ENCODE measurements at regions of chr2 and their contacts with region 1.

Region 1: GRCh38 chr2:219155054-219155644 is 5.5 kb downstream of the NHEJ1 start:
- DNase-seq: peak; percentile 61
- H3K4me3 ChIP-seq: no peak overlapping the region
- H3K27ac ChIP-seq: no peak overlapping the region
- H3K4me1 ChIP-seq: peaks cover 6% of the 10 kb centered on the region
- H3K27me3 ChIP-seq: no peaks in the 10 kb centered on the region
- CTCF ChIP-seq: peak; percentile 28 to 36
- POLR2A ChIP-seq: no peak

Region 2: GRCh38 chr2:218485986-218486667 is 669.0 kb before region 1 on chr2:
- CTCF ChIA-PET with region 1: no interaction called
- POLR2A ChIA-PET with region 1: no interaction called
- dilution Hi-C with region 1: no loop called
- intact Hi-C with region 1: no loop called
- DNase-seq: no peak
- H3K4me3 ChIP-seq: no peak overlapping the region
- H3K27ac ChIP-seq: no peak overlapping the region
- H3K4me1 ChIP-seq: no peaks in the 10 kb centered on the region
- H3K27me3 ChIP-seq: no peaks in the 10 kb centered on the region
- CTCF ChIP-seq: no peak
- POLR2A ChIP-seq: no peak

Region 3: GRCh38 chr2:218995972-218996711 is 159.0 kb before region 1 on chr2:
- CTCF ChIA-PET with region 1: interaction called, 50 read pairs
- POLR2A ChIA-PET with region 1: no interaction called
- dilution Hi-C with region 1: no loop called
- intact Hi-C with region 1: no loop called
- DNase-seq: peak; percentile 65
- H3K4me3 ChIP-seq: no peak overlapping the region
- H3K27ac ChIP-seq: no peak overlapping the region
- H3K4me1 ChIP-seq: peaks cover 5% of the 10 kb centered on the region
- H3K27me3 ChIP-seq: peaks cover 79 to 83% of the 10 kb centered on the region in 2 experiments
- CTCF ChIP-seq: peak; percentile 73 to 94
- POLR2A ChIP-seq: no peak

Region 4: GRCh38 chr2:219041252-219041651 is 113.9 kb before region 1 on chr2 and contains the start of gene CFAP65:
- CTCF ChIA-PET with region 1: interaction called, 24 read pairs
- POLR2A ChIA-PET with region 1: no interaction called
- dilution Hi-C with region 1: no loop called
- intact Hi-C with region 1: no loop called
- DNase-seq: peak; percentile 40
- H3K4me3 ChIP-seq: peak within 1 kb of the TSS in 1 of 3 experiments; percentile 21
- H3K27ac ChIP-seq: no peak within 1 kb of the TSS
- H3K4me1 ChIP-seq: no peaks in the 10 kb centered on the region
- H3K27me3 ChIP-seq: peaks cover 18 to 22% of the 10 kb centered on the region in 2 experiments
- CTCF ChIP-seq: no peak
- POLR2A ChIP-seq: no peak
- total RNA-seq, gene CFAP65: not detected in 2 replicates

Region 5: DNA sequence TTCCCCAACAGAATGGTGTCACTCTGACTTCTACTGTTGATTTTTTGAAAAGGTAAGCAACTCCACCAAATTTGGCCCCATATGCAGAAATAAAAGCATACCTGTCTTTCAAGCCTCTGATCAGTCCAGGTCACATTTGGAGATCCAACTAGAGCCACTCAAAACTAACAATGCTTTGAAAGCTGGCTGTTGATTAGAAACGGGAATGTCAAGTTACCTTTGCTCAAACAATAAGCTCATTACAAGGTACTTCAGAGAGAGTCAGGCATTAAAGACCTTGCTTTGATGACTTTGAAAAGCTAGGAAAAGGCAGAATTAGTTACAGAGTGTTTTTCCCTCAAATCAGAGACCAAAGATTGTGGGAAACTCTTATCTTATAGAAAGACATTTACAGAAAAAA is 89.7 kb before region 1 on chr2:
- CTCF ChIA-PET with region 1: interaction called, 148 read pairs
- POLR2A ChIA-PET with region 1: no interaction called
- dilution Hi-C with region 1: no loop called
- intact Hi-C with region 1: no loop called
- DNase-seq: no peak
- H3K4me3 ChIP-seq: no peak overlapping the region
- H3K27ac ChIP-seq: no peak overlapping the region
- H3K4me1 ChIP-seq: no peaks in the 10 kb centered on the region
- H3K27me3 ChIP-seq: peaks cover 21 to 35% of the 10 kb centered on the region in 2 experiments
- CTCF ChIP-seq: no peak
- POLR2A ChIP-seq: no peak

Region 6: DNA sequence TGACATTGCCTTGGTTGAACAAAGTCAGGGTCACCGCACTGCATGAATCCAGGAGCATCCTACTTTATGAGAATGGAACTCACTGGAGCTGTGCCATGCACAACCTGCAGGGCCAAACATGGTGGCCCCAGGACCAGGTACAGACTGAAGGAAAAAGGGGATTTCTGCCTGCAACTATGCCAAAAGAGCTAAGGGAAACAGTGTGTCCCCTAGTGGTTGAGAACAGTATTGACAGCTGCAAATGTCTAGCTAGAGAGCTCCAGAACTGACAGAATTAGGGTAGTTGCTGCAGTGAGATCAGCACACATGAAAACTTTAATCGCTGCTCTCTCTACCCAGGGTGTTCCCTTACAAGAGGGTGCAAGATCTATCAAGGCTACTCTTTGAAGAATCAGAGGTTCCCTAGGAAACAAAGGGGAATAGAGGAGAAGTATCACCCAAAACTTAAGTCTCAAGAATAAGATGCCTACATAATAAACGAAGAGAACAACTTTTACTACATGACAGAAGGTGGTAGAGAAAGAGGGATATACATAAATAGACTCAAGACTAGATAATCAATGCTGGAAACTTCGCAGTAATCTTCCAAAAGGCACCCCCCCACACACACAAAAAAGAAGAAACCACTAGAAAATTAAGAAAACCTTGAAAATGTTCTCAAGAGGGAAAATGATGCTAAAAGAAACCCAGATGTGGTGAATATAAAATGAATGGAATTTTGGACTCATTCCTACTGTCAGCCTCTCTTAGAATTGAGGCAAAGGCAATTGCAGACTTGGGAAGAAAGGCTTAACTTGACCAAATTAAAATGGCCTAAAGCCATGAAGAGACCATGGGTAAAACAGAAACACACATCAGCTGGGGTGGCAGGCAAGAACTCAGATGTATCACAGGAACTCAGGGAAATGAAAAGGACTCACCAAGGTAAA is 50.8 kb before region 1 on chr2:
- CTCF ChIA-PET with region 1: interaction called, 14 read pairs
- POLR2A ChIA-PET with region 1: no interaction called
- dilution Hi-C with region 1: no loop called
- intact Hi-C with region 1: no loop called
- DNase-seq: peak; percentile 35
- H3K4me3 ChIP-seq: no peak overlapping the region
- H3K27ac ChIP-seq: no peak overlapping the region
- H3K4me1 ChIP-seq: no peaks in the 10 kb centered on the region
- H3K27me3 ChIP-seq: no peaks in the 10 kb centered on the region
- CTCF ChIP-seq: peak; percentile 84 to 86
- POLR2A ChIP-seq: no peak

Region 7: DNA sequence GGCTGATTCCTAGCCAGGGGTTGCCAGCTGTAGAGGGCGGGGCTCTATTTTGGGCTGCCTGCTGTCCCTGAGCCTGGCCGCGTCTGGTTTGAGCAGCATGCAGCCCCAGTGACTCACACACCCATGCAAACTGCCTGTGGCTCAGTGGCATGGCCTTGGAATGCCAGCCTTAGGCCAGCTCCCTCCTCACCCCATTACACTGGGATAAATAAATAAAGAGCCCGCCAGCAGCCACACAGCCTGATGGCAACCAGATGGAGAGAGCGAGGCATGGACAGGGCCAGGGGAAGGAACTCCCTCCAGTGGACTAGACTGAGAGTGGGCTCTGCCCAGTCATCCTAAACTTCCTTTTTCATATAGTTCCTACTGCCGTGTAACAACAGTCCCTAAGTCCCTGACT is 12.8 kb before region 1 on chr2:
- CTCF ChIA-PET with region 1: interaction called, 26 read pairs
- POLR2A ChIA-PET with region 1: no interaction called
- dilution Hi-C with region 1: no loop called
- intact Hi-C with region 1: no loop called
- DNase-seq: no peak
- H3K4me3 ChIP-seq: no peak overlapping the region
- H3K27ac ChIP-seq: no peak overlapping the region
- H3K4me1 ChIP-seq: no peaks in the 10 kb centered on the region
- H3K27me3 ChIP-seq: no peaks in the 10 kb centered on the region
- CTCF ChIP-seq: no peak
- POLR2A ChIP-seq: no peak